ENCODE measurements at regions of chr3 and their contacts with region 1.

Region 1: GRCh38 chr3:187702507-187703033 is at the start of gene RTP2:
- H3K4me3 ChIP-seq: no peak within 1 kb of the TSS
- H3K27ac ChIP-seq: no peak within 1 kb of the TSS
- H3K4me1 ChIP-seq: no peaks in the 10 kb centered on the region
- CTCF ChIP-seq: no peak

Region 2: DNA sequence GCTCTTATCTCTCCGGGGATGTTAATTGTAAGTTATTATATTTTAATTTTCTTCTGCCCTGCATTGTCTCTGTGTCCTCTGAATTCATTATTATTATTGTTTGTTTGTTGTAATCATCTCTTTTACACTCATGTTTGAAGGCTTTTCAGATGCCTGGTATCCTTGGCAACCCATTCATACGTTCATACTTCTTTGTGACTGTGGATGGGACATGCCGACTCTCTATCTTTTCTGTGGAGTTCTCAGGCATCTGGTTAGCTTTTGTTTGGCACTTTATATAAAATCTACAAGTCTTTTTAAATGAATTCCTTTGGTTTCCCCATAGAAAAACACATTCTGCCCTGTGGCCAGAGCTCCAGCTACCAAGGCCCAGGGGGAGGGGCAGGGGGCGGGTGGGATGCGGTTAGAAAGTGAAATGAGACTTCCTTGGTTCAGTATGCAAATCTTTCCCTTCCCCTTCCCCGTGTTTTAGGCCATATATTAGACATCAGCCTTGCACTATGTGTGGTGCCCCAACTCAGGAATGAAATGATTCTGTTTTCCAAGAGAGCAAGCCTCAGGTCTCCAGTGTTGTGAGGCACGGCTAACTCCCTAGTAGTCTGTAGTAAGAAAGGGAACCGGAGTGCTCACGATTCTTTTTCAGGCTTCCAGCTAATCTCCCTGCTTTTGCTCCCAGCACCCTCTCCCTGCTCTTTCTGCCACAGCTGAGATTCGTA is 111.6 kb before region 1 on chr3:
- CTCF ChIA-PET with region 1: no interaction called
- POLR2A ChIA-PET with region 1: no interaction called
- H3K4me3 ChIP-seq: no peak overlapping the region
- H3K27ac ChIP-seq: no peak overlapping the region
- H3K4me1 ChIP-seq: no peaks in the 10 kb centered on the region
- CTCF ChIP-seq: no peak

Region 3: GRCh38 chr3:187714404-187714979 is 11.9 kb after region 1 on chr3:
- CTCF ChIA-PET with region 1: interaction called, 18 read pairs
- POLR2A ChIA-PET with region 1: no interaction called
- H3K4me3 ChIP-seq: no peak overlapping the region
- H3K27ac ChIP-seq: no peak overlapping the region
- H3K4me1 ChIP-seq: no peaks in the 10 kb centered on the region
- CTCF ChIP-seq: peak; percentile 67